ENCODE measurements at regions of chr11 and their contacts with region 1.

Region 1: GRCh38 chr11:95150946-95151684 is 61.5 kb downstream of the ENDOD1 start:
- DNase-seq: peak; percentile 91 to 93 (median 91)
- H3K4me3 ChIP-seq: peak overlapping the region; percentile 45 to 87
- H3K4me3 Mint-ChIP-seq: peak overlapping the region; percentile 85 to 96 (median 90)
- H3K27ac ChIP-seq: peak overlapping the region; percentile 80
- H3K27ac Mint-ChIP-seq: peak overlapping the region; percentile 90 to 99 (median 97)
- H3K4me1 ChIP-seq: peaks cover 35% of the 10 kb centered on the region
- H3K4me1 Mint-ChIP-seq: peaks cover 26 to 44% (median 36%) of the 10 kb centered on the region in 4 donors
- H3K27me3 ChIP-seq: no peaks in the 10 kb centered on the region
- H3K27me3 Mint-ChIP-seq: peaks cover 2 to 8% of the 10 kb centered on the region in 2 donors

Region 2: GRCh38 chr11:94511932-94512781 is 639.0 kb before region 1 on chr11 and contains the start of gene C11orf97:
- CTCF ChIA-PET with region 1: no interaction called
- POLR2A ChIA-PET with region 1: no interaction called
- intact Hi-C with region 1: loop called (anchors 10 kb)
- DNase-seq: peak; percentile 36 to 46 (median 41)
- H3K4me3 ChIP-seq: peak within 1 kb of the TSS in 1 of 2 donors; percentile 51
- H3K4me3 Mint-ChIP-seq: peak within 1 kb of the TSS; percentile 73 to 85 (median 80)
- H3K27ac ChIP-seq: no peak within 1 kb of the TSS
- H3K27ac Mint-ChIP-seq: peak within 1 kb of the TSS in 3 of 7 donors; percentile 19 to 73 (median 47)
- H3K4me1 ChIP-seq: peaks cover 13% of the 10 kb centered on the region
- H3K4me1 Mint-ChIP-seq: peaks cover 10 to 17% (median 13%) of the 10 kb centered on the region in 4 donors
- H3K27me3 ChIP-seq: no peaks in the 10 kb centered on the region
- H3K27me3 Mint-ChIP-seq: peaks cover 9 to 12% of the 10 kb centered on the region in 2 donors
- total RNA-seq, gene C11orf97: not detected

Region 3: DNA sequence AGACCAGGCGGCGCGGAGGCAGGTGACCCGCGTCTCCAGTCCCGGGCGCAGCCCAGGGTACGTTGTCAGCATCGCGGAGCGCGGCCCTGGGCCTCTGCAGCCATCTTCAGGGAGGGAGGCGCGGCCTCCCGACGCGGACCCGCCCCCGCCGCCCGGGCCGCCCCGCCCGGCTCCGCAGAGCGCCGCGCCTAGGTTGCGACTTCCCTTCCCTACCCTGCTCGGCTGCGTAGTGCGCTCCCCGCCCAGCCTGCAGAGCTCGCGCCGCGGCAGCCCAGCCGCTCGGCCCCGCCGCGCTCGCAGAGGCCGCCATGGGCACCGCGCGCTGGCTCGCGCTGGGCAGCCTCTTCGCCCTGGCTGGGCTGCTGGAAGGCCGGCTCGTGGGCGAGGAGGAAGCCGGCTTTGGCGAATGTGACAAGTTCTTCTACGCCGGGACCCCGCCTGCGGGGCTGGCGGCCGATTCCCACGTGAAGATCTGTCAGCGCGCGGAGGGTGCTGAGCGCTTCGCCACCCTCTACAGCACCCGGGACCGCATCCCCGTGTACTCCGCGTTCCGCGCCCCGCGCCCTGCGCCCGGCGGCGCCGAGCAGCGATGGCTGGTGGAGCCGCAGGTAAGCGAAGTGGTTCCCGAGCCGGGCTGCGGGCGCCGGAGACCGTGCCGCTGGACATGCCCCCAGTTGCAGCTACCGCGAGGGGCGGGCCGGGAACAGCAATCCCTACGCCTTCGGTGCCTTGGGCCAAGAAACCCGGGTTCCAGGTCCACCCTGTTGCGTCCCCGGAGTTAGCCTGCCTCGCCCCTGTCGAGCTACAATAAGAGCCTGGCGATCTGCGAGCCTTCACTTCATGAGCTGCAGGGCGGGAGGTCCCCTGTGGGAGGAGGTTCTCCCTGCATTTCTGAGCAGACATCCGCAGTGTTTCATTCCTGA is 61.2 kb before region 1 on chr11 and contains the start of gene ENDOD1:
- CTCF ChIA-PET with region 1: interaction called, 58 read pairs
- POLR2A ChIA-PET with region 1: interaction called, 60 read pairs
- intact Hi-C with region 1: loop called (anchors 1 kb)
- DNase-seq: peak; percentile 86 to 89 (median 87)
- H3K4me3 ChIP-seq: peak within 1 kb of the TSS; percentile 45 to 76
- H3K4me3 Mint-ChIP-seq: peak within 1 kb of the TSS; percentile 91 to 96 (median 92)
- H3K27ac ChIP-seq: peak within 1 kb of the TSS; percentile 67
- H3K27ac Mint-ChIP-seq: peak within 1 kb of the TSS; percentile 92 to 99 (median 98)
- H3K4me1 ChIP-seq: peaks cover 43% of the 10 kb centered on the region
- H3K4me1 Mint-ChIP-seq: peaks cover 36 to 55% (median 46%) of the 10 kb centered on the region in 4 donors
- H3K27me3 ChIP-seq: no peaks in the 10 kb centered on the region
- H3K27me3 Mint-ChIP-seq: no peaks in the 10 kb centered on the region
- total RNA-seq, gene ENDOD1: 12.8 to 13.3 TPM

Region 4: GRCh38 chr11:95182397-95182796 is 31.3 kb after region 1 on chr11:
- CTCF ChIA-PET with region 1: interaction called, 14 read pairs
- POLR2A ChIA-PET with region 1: no interaction called
- intact Hi-C with region 1: no loop called
- DNase-seq: no peak
- H3K4me3 ChIP-seq: no peak overlapping the region
- H3K4me3 Mint-ChIP-seq: no peak overlapping the region
- H3K27ac ChIP-seq: no peak overlapping the region
- H3K27ac Mint-ChIP-seq: peak overlapping the region in 6 of 7 donors; percentile 16 to 47 (median 24)
- H3K4me1 ChIP-seq: no peaks in the 10 kb centered on the region
- H3K4me1 Mint-ChIP-seq: peaks cover 2 to 10% (median 8%) of the 10 kb centered on the region in 4 donors
- H3K27me3 ChIP-seq: no peaks in the 10 kb centered on the region
- H3K27me3 Mint-ChIP-seq: no peaks in the 10 kb centered on the region

Region 5: DNA sequence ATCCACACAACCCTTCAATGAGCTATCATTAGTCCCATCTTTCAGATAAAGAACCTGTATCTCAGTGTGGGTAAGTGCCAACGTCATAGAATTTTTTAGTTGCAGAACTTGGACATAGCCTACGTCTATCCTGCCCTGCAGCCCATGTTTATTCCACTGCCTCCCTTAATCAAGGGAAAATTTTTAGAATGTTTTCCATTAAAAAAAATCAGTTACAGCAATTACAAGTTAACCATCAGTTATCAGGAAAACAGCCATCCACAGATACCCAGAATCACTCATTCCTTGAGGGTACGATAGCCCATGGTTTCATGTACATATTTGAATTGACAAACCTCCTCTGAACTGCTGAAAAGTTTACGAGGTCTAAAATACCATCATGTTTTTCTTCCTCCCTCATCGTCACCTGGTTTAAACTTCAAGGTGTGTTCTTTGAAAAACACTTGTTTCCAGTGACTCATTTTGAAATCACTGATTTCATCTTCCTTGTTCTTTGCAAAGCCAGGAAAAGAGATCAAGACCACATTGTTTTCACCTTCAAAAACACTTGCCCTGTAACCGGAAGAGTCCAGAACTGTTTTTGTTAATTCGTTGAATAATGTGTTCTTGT is 537.6 kb after region 1 on chr11:
- CTCF ChIA-PET with region 1: interaction called, 10 read pairs
- POLR2A ChIA-PET with region 1: interaction called, 10 read pairs
- intact Hi-C with region 1: no loop called
- DNase-seq: peak; percentile 65 to 69 (median 66)
- H3K4me3 ChIP-seq: peak overlapping the region in 1 of 2 donors; percentile 16
- H3K4me3 Mint-ChIP-seq: peak overlapping the region in 1 of 8 donors; percentile 1
- H3K27ac ChIP-seq: peak overlapping the region; percentile 41
- H3K27ac Mint-ChIP-seq: no peak overlapping the region
- H3K4me1 ChIP-seq: peaks cover 80% of the 10 kb centered on the region
- H3K4me1 Mint-ChIP-seq: peaks cover 16 to 25% (median 23%) of the 10 kb centered on the region in 4 donors
- H3K27me3 ChIP-seq: no peaks in the 10 kb centered on the region
- H3K27me3 Mint-ChIP-seq: no peaks in the 10 kb centered on the region

Region 6: DNA sequence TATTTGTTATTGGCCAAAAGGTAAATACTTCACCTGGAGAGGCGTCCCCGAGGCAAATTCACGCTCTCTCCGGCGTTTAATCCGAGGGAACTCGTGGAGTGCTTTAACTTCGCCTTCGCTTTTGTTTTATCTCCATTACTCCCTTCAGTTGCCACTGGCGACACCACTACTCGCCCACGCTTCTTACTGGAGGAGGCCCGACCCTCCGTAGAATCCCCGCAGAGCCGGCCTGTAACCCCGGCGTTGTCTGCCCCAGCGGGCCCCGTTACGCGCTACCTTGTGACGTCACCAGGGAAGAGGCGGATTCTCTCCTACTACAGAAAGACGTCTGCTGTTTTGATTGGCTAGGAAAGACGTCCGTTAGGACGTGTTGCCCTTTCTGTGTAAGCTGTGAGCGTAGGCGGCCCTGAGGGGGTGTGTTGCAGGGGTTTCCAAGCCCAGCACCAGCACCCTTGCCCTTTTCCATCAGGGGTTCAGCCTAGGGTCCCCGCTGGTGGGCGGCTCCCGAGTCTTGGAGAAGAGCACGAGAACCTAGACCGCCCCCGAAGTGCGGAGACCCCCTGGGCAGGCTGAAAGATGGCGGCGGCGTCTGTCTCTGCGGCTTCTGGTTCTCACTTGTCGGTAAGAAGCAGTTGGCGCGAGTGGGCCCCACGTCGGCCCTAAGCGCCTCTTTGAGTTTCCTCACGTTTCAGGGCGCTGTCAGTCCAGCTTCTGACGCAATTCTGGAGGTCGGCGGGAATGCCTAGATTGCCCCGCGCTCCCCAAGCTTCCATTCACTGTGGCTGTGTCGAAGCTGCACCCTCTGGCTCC is 639.2 kb after region 1 on chr11 and contains the start of gene CEP57:
- CTCF ChIA-PET with region 1: interaction called, 17 read pairs
- POLR2A ChIA-PET with region 1: interaction called, 69 read pairs
- intact Hi-C with region 1: loop called (anchors 1 kb)
- DNase-seq: peak; percentile 95 to 99 (median 96)
- H3K4me3 ChIP-seq: peak within 1 kb of the TSS; percentile 68 to 98
- H3K4me3 Mint-ChIP-seq: peak within 1 kb of the TSS; percentile 97 to 100 (median 99)
- H3K27ac ChIP-seq: peak within 1 kb of the TSS; percentile 99
- H3K27ac Mint-ChIP-seq: peak within 1 kb of the TSS; percentile 100
- H3K4me1 ChIP-seq: peaks cover 47% of the 10 kb centered on the region
- H3K4me1 Mint-ChIP-seq: peaks cover 43 to 70% (median 56%) of the 10 kb centered on the region in 4 donors
- H3K27me3 ChIP-seq: no peaks in the 10 kb centered on the region
- H3K27me3 Mint-ChIP-seq: no peaks in the 10 kb centered on the region
- total RNA-seq, gene CEP57: 76.0 to 78.9 TPM